CD4-positive, alpha-beta T cell (primary cell): ENCODE measurements at regions of chr12 and their contacts with region 1.

Region 1: GRCh38 chr12:11581179-11581755 is 68.2 kb upstream of the ETV6 start:
- DNase-seq: peak; percentile 24 to 85 (median 60)
- ATAC-seq: no peak
- H3K4me3 ChIP-seq: no peak overlapping the region
- H3K4me3 Mint-ChIP-seq: no peak overlapping the region
- H3K27ac ChIP-seq: no peak overlapping the region
- H3K27ac Mint-ChIP-seq: no peak overlapping the region
- H3K4me1 ChIP-seq: peaks cover 3% of the 10 kb centered on the region
- H3K4me1 Mint-ChIP-seq: no peaks in the 10 kb centered on the region
- H3K27me3 ChIP-seq: no peaks in the 10 kb centered on the region
- H3K27me3 Mint-ChIP-seq: no peaks in the 10 kb centered on the region
- CTCF ChIP-seq: peak; percentile 82

Region 2: GRCh38 chr12:11812586-11813427 is 231.5 kb after region 1 on chr12:
- CTCF ChIA-PET with region 1: interaction called, 3 read pairs
- POLR2A ChIA-PET with region 1: no interaction called
- intact Hi-C with region 1: loop called in 1 of 2 experiments (anchors 5 kb)
- DNase-seq: peak in 8 of 14 experiments; percentile 12 to 49 (median 20)
- ATAC-seq: peak; percentile 60
- H3K4me3 ChIP-seq: peak overlapping the region; percentile 40
- H3K4me3 Mint-ChIP-seq: peak overlapping the region; percentile 56
- H3K27ac ChIP-seq: peak overlapping the region in 1 of 2 donors; percentile 7
- H3K27ac Mint-ChIP-seq: peak overlapping the region; percentile 51
- H3K4me1 ChIP-seq: peaks cover 29% of the 10 kb centered on the region
- H3K4me1 Mint-ChIP-seq: peaks cover 65% of the 10 kb centered on the region
- H3K27me3 ChIP-seq: no peaks in the 10 kb centered on the region
- H3K27me3 Mint-ChIP-seq: no peaks in the 10 kb centered on the region
- CTCF ChIP-seq: peak; percentile 16

Region 3: GRCh38 chr12:12327802-12328201 is 746.5 kb after region 1 on chr12:
- CTCF ChIA-PET with region 1: no interaction called
- POLR2A ChIA-PET with region 1: no interaction called
- intact Hi-C with region 1: loop called (anchors 1 to 2 kb)
- DNase-seq: peak in 5 of 14 experiments; percentile 7 to 82 (median 74)
- ATAC-seq: peak; percentile 92
- H3K4me3 ChIP-seq: no peak overlapping the region
- H3K4me3 Mint-ChIP-seq: no peak overlapping the region
- H3K27ac ChIP-seq: no peak overlapping the region
- H3K27ac Mint-ChIP-seq: peak overlapping the region; percentile 21
- H3K4me1 ChIP-seq: peaks cover 4% of the 10 kb centered on the region
- H3K4me1 Mint-ChIP-seq: peaks cover 14% of the 10 kb centered on the region
- H3K27me3 ChIP-seq: no peaks in the 10 kb centered on the region
- H3K27me3 Mint-ChIP-seq: no peaks in the 10 kb centered on the region
- CTCF ChIP-seq: peak; percentile 81